Activated CD4-positive, alpha-beta memory T cell treated with anti-CD3 and anti-CD28 coated beads, Interleukin-2, amount 10 ng/mL, durations not matched to agents 7 days and 5 days (primary cell): ENCODE measurements at regions of chr6 and their contacts with region 1.

Region 1: DNA sequence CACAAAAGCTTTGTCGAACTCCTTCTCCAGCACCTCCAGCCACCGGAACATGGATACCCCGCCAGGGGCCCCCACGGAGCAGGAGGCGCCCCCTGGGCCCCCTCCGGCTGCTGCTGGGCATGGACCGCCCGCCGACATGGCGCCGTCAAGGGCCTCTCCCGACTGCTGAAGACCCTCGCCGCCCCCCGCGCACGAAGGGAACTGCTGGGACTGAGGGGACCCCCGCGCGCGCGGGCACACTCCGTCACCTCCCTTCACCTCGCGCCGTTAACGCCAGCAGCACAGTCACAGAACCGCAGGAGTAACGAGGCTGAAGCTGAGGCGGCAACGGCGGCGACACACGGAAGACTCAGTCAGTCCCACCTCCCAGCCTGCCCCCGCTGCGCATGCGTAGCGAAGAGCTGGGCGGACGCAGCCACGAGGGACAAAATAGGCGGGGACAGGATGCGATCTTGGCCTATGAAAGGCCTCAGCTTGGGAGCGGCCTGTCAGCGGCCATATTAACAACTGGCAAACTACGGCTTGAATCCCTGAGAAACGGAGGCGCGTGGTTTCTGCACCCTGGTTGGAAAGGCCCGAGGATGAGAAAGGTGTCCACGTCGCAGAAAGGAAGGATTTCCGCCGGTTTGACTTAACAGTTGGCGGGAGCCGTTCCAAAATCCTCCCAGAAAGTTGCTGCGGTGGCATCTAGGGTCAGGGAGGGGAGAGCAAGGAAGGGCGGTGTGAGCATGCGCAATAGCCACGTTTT is at the start of gene GOPC:
- DNase-seq: peak; percentile 96
- H3K4me3 Mint-ChIP-seq: peak within 1 kb of the TSS; percentile 99
- H3K27ac Mint-ChIP-seq: peak within 1 kb of the TSS; percentile 96
- H3K4me1 Mint-ChIP-seq: peaks cover 38% of the 10 kb centered on the region
- H3K27me3 Mint-ChIP-seq: peaks cover 1% of the 10 kb centered on the region
- total RNA-seq, gene GOPC: 22.9 to 23.9 TPM

Region 2: GRCh38 chr6:117449549-117450439 is 152.5 kb before region 1 on chr6:
- CTCF ChIA-PET with region 1: interaction called, 72 read pairs
- POLR2A ChIA-PET with region 1: interaction called, 8 read pairs
- DNase-seq: peak; percentile 59
- H3K4me3 Mint-ChIP-seq: no peak overlapping the region
- H3K27ac Mint-ChIP-seq: no peak overlapping the region
- H3K4me1 Mint-ChIP-seq: no peaks in the 10 kb centered on the region
- H3K27me3 Mint-ChIP-seq: peaks cover 31% of the 10 kb centered on the region

Region 3: GRCh38 chr6:117482240-117483003 is 119.9 kb before region 1 on chr6 and contains the start of gene DCBLD1:
- CTCF ChIA-PET with region 1: interaction called, 14 read pairs
- POLR2A ChIA-PET with region 1: interaction called, 47 read pairs
- DNase-seq: peak; percentile 76
- H3K4me3 Mint-ChIP-seq: peak within 1 kb of the TSS; percentile 81
- H3K27ac Mint-ChIP-seq: peak within 1 kb of the TSS; percentile 68
- H3K4me1 Mint-ChIP-seq: peaks cover 24% of the 10 kb centered on the region
- H3K27me3 Mint-ChIP-seq: peaks cover 30% of the 10 kb centered on the region
- total RNA-seq, gene DCBLD1: 7.8 to 10.6 TPM

Region 4: GRCh38 chr6:117547688-117548621 is 54.4 kb before region 1 on chr6:
- CTCF ChIA-PET with region 1: interaction called, 16 read pairs
- POLR2A ChIA-PET with region 1: interaction called, 59 read pairs
- DNase-seq: peak; percentile 58
- H3K4me3 Mint-ChIP-seq: peak overlapping the region; percentile 75
- H3K27ac Mint-ChIP-seq: peak overlapping the region; percentile 94
- H3K4me1 Mint-ChIP-seq: peaks cover 44% of the 10 kb centered on the region
- H3K27me3 Mint-ChIP-seq: no peaks in the 10 kb centered on the region

Region 5: GRCh38 chr6:117674991-117675657 is 72.8 kb after region 1 on chr6 and contains the start of gene NUS1:
- CTCF ChIA-PET with region 1: interaction called, 3 read pairs
- POLR2A ChIA-PET with region 1: interaction called, 11 read pairs
- DNase-seq: peak; percentile 98
- H3K4me3 Mint-ChIP-seq: peak within 1 kb of the TSS; percentile 83
- H3K27ac Mint-ChIP-seq: peak within 1 kb of the TSS; percentile 75
- H3K4me1 Mint-ChIP-seq: peaks cover 43% of the 10 kb centered on the region
- H3K27me3 Mint-ChIP-seq: no peaks in the 10 kb centered on the region
- total RNA-seq, gene NUS1: 25.3 to 26.8 TPM

Region 6: DNA sequence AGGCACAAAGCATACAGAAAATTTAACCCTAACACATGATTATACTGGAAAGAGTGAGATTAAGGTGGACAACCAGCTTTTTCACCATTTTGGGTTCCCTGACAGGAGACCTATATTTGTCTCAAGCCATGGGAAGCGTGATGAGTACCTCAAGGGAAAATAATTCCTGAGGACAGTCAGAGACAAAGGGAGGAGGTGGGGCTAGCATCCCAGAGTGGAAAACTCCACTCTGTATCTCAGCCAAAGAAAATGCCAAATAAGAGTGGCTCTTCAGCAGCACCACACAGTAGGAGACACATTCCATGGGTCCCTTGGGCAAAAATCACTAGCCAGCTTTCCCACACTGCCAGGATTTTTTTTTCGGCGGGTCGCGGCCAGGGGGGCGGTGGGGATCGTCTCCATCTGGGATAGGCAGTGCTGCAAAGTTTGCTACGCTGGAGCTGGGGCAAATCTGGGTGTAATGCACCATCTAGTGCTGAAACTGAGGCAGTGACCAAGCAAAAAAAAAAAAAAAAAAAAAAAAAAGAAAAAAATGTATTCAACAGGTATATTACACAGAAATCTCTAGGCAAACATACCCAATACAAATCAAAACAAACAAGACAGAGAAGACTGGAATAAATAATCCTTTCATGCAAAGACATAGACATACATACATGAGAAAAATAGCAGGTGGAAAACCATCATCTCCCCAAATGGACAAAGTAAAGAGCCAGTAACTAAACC is 227.4 kb after region 1 on chr6:
- CTCF ChIA-PET with region 1: no interaction called
- POLR2A ChIA-PET with region 1: no interaction called
- DNase-seq: no peak
- H3K4me3 Mint-ChIP-seq: no peak overlapping the region
- H3K27ac Mint-ChIP-seq: no peak overlapping the region
- H3K4me1 Mint-ChIP-seq: no peaks in the 10 kb centered on the region
- H3K27me3 Mint-ChIP-seq: peaks cover 4% of the 10 kb centered on the region

Region 7: DNA sequence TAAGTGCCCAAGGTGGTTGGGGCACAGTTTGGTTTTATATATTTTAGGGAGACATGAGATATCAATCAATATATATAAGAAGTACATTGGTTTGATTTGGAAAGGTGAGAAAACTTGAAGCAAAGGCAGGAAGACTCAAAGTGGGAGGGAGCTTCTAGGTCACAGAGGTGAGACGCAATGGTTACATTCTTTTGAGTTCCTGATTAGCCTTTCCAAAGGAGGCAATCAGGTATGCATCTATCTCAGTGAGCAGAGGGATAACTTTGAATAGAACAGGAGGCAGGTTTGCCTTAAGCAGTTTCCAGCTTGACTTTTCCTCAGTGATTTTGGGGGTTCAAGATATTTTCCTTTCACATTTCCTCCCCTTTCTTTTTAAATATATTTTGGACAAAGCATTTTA is 246.8 kb after region 1 on chr6:
- CTCF ChIA-PET with region 1: no interaction called
- POLR2A ChIA-PET with region 1: no interaction called
- DNase-seq: no peak
- H3K4me3 Mint-ChIP-seq: no peak overlapping the region
- H3K27ac Mint-ChIP-seq: no peak overlapping the region
- H3K4me1 Mint-ChIP-seq: no peaks in the 10 kb centered on the region
- H3K27me3 Mint-ChIP-seq: no peaks in the 10 kb centered on the region